PC-3 (cell line): ENCODE measurements at regions of chr10 and their contacts with region 1.

Region 1: GRCh38 chr10:51074238-51075028 is at the start of gene PRKG1:
- DNase-seq: peak; percentile 97
- ATAC-seq: peak; percentile 86
- H3K4me3 ChIP-seq: peak within 1 kb of the TSS; percentile 72
- H3K27ac ChIP-seq: peak within 1 kb of the TSS; percentile 10
- H3K4me1 ChIP-seq: peaks cover 21% of the 10 kb centered on the region
- H3K27me3 ChIP-seq: no peaks in the 10 kb centered on the region
- CTCF ChIP-seq: no peak
- total RNA-seq, gene PRKG1: 6.3 and 7.4 TPM in 2 replicates

Region 2: GRCh38 chr10:51092402-51092801 is 18.0 kb after region 1 on chr10:
- CTCF ChIA-PET with region 1: no interaction called
- POLR2A ChIA-PET with region 1: no interaction called
- intact Hi-C with region 1: loop called (anchors 2 kb)
- DNase-seq: peak; percentile 79
- ATAC-seq: peak; percentile 50
- H3K4me3 ChIP-seq: no peak overlapping the region
- H3K27ac ChIP-seq: no peak overlapping the region
- H3K4me1 ChIP-seq: peaks cover 9% of the 10 kb centered on the region
- H3K27me3 ChIP-seq: no peaks in the 10 kb centered on the region
- CTCF ChIP-seq: no peak

Region 3: GRCh38 chr10:51124852-51125251 is 50.4 kb after region 1 on chr10:
- CTCF ChIA-PET with region 1: no interaction called
- POLR2A ChIA-PET with region 1: no interaction called
- intact Hi-C with region 1: no loop called
- DNase-seq: peak; percentile 69
- ATAC-seq: peak; percentile 35; the same call in 1 of the 2 replicates
- H3K4me3 ChIP-seq: no peak overlapping the region
- H3K27ac ChIP-seq: no peak overlapping the region
- H3K4me1 ChIP-seq: peaks cover 13% of the 10 kb centered on the region
- H3K27me3 ChIP-seq: no peaks in the 10 kb centered on the region
- CTCF ChIP-seq: no peak

Region 4: GRCh38 chr10:51170518-51171245 is 96.2 kb after region 1 on chr10:
- CTCF ChIA-PET with region 1: interaction called, 4 read pairs
- POLR2A ChIA-PET with region 1: interaction called, 12 read pairs
- intact Hi-C with region 1: loop called (anchors 1 kb)
- DNase-seq: peak; percentile 87
- ATAC-seq: peak; percentile 75
- H3K4me3 ChIP-seq: no peak overlapping the region
- H3K27ac ChIP-seq: peak overlapping the region; percentile 2
- H3K4me1 ChIP-seq: peaks cover 31% of the 10 kb centered on the region
- H3K27me3 ChIP-seq: no peaks in the 10 kb centered on the region
- CTCF ChIP-seq: no peak

Region 5: GRCh38 chr10:51231754-51232153 is 157.3 kb after region 1 on chr10:
- CTCF ChIA-PET with region 1: no interaction called
- POLR2A ChIA-PET with region 1: interaction called, 5 read pairs
- intact Hi-C with region 1: loop called (anchors 1 kb)
- DNase-seq: peak; percentile 94
- ATAC-seq: peak; percentile 78
- H3K4me3 ChIP-seq: no peak overlapping the region
- H3K27ac ChIP-seq: no peak overlapping the region
- H3K4me1 ChIP-seq: peaks cover 34% of the 10 kb centered on the region
- H3K27me3 ChIP-seq: no peaks in the 10 kb centered on the region
- CTCF ChIP-seq: no peak

Region 6: DNA sequence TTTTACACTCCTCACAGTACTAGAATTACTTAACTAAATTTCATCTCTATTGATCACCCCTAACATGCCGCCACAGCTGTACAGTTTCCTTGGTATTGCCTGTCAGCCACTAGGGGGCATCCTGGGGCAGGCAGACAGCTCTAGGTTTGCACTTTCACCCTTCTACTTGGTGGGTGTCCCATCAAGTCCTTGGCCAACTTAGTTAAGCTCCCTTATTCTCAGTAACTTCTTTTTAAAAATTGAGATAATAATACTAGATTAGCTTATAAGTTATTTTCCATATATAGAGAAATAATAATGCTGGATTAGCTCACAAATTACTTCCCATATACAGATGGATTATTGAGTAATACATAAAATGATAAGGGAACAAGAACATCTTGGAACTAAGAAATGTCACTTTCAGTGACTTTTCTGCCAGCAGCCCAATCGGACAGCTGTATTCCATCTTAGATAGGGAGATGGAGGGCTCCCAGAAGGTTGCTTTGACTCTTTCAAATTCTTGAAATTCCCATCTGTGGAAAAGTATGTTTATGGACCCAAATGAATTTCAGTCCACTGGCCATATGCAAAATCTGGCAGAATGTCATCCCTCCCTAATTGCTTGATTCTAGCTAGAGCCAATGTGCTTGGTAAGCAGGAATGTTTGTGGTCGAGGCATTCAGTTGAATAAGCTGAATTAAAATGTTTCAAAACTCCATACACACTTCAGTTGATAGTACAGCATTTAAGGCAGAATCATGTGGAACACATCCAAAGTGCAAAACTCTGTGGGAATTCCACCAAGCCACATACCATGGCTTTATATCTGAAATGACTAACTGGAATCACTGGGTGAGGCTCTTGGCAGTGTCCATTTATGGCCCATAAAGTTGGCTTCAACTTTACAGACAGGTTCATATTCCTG is 315.2 kb after region 1 on chr10:
- CTCF ChIA-PET with region 1: interaction called, 3 read pairs
- POLR2A ChIA-PET with region 1: no interaction called
- intact Hi-C with region 1: loop called (anchors 1 kb)
- DNase-seq: peak; percentile 100
- ATAC-seq: peak; percentile 96
- H3K4me3 ChIP-seq: no peak overlapping the region
- H3K27ac ChIP-seq: peak overlapping the region; percentile 77
- H3K4me1 ChIP-seq: peaks cover 33% of the 10 kb centered on the region
- H3K27me3 ChIP-seq: no peaks in the 10 kb centered on the region
- CTCF ChIP-seq: peak; percentile 100